ENCODE measurements at regions of chr16 and their contacts with region 1.

Region 1: GRCh38 chr16:84970447-84971127 is 40.7 kb downstream of the ZDHHC7 start:
- DNase-seq: peak; percentile 68 to 90
- ATAC-seq: peak; percentile 90 to 95 (median 92)
- H3K4me3 ChIP-seq: no peak overlapping the region
- H3K4me3 Mint-ChIP-seq: no peak overlapping the region
- H3K27ac ChIP-seq: no peak overlapping the region
- H3K27ac Mint-ChIP-seq: no peak overlapping the region
- H3K4me1 ChIP-seq: peaks cover 5% of the 10 kb centered on the region
- H3K4me1 Mint-ChIP-seq: peaks cover 0 to 4% of the 10 kb centered on the region in 2 donors
- H3K27me3 ChIP-seq: no peaks in the 10 kb centered on the region
- H3K27me3 Mint-ChIP-seq: no peaks in the 10 kb centered on the region
- CTCF ChIP-seq: peak; percentile 95

Region 2: GRCh38 chr16:84754353-84754856 is 216.2 kb before region 1 on chr16:
- intact Hi-C with region 1: loop called (anchors 1 kb)
- DNase-seq: peak; percentile 27 to 89
- ATAC-seq: peak; percentile 76 to 85 (median 85)
- H3K4me3 ChIP-seq: no peak overlapping the region
- H3K4me3 Mint-ChIP-seq: no peak overlapping the region
- H3K27ac ChIP-seq: no peak overlapping the region
- H3K27ac Mint-ChIP-seq: peak overlapping the region; percentile 9 to 44
- H3K4me1 ChIP-seq: peaks cover 26% of the 10 kb centered on the region
- H3K4me1 Mint-ChIP-seq: peaks cover 65 to 76% of the 10 kb centered on the region in 2 donors
- H3K27me3 ChIP-seq: no peaks in the 10 kb centered on the region
- H3K27me3 Mint-ChIP-seq: no peaks in the 10 kb centered on the region
- CTCF ChIP-seq: peak; percentile 77

Region 3: DNA sequence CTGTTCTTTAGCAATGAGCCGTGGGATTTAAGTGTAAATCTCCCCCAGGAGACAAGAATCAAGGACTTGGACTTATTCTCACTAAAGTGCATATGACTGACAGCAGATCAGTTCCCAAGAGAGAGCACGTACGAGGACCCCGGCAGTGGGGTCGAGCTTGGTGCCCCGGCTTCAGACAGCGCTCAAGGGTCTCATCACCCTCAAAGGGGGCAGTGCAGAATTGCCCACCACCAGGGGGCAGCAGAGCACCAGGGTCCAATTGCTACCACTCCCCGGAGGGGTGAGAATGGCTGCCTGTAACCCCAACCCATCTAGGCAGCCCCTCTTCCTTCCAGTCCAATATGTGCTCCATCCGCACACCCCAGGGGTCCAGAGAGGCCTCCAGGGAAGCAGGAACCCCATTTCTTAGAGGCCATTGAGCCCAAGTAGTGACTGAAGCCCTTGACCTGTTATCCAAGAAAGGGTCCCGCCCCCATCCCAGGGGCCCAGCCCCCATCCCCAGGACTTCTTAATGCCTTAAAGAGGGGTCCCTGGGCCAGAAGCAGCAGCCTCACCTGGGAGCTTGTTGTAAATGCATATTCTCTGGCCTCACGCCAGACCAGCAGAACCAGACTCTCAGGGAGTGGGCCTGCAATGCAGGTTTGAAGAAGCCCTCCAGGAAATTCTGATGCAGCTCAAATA is 45.4 kb before region 1 on chr16:
- intact Hi-C with region 1: loop called (anchors 1 kb)
- DNase-seq: peak; percentile 54 to 79
- ATAC-seq: peak in 2 of 3 donors; percentile 61 to 63
- H3K4me3 ChIP-seq: no peak overlapping the region
- H3K4me3 Mint-ChIP-seq: no peak overlapping the region
- H3K27ac ChIP-seq: no peak overlapping the region
- H3K27ac Mint-ChIP-seq: no peak overlapping the region
- H3K4me1 ChIP-seq: peaks cover 4% of the 10 kb centered on the region
- H3K4me1 Mint-ChIP-seq: peaks cover 0 to 9% of the 10 kb centered on the region in 2 donors
- H3K27me3 ChIP-seq: no peaks in the 10 kb centered on the region
- H3K27me3 Mint-ChIP-seq: peaks cover 0 to 6% of the 10 kb centered on the region in 2 donors
- CTCF ChIP-seq: peak; percentile 79